Endothelial cell of umbilical vein (primary cell): ENCODE measurements at regions of chr19 and their contacts with region 1.

Region 1: GRCh38 chr19:16836115-16837034 is 7.2 kb downstream of the SIN3B start:
- DNase-seq: no peak
- H3K4me3 ChIP-seq: no peak overlapping the region
- H3K27ac ChIP-seq: no peak overlapping the region
- H3K4me1 ChIP-seq: peaks cover 33% of the 10 kb centered on the region
- H3K27me3 ChIP-seq: no peaks in the 10 kb centered on the region
- CTCF ChIP-seq: peak in 1 of 2 donors; percentile 4
- POLR2A ChIP-seq: no peak

Region 2: DNA sequence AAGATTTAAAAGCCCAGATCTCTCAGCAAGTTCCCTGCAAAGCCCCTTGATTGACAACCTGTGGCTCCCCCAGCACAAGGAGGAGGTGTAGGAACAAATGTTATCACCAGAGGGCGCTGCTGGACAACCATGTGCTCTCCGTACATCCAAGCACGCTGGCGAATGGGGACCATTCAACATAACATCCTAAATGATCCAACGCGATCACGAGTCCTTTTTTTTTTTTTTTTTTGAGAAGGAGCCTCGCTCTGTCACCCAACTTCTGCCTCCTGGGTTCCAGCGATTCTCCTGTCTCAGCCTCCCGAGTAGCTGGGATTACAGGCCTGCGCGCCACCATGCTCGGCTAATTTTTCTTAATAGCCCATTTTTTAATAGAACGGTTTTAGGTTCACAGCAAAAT is 64.8 kb before region 1 on chr19:
- CTCF ChIA-PET with region 1: no interaction called
- POLR2A ChIA-PET with region 1: no interaction called
- dilution Hi-C with region 1: no loop called
- intact Hi-C with region 1: loop called (anchors 10 kb)
- DNase-seq: peak; percentile 81
- H3K4me3 ChIP-seq: no peak overlapping the region
- H3K27ac ChIP-seq: no peak overlapping the region
- H3K4me1 ChIP-seq: no peaks in the 10 kb centered on the region
- H3K27me3 ChIP-seq: no peaks in the 10 kb centered on the region
- CTCF ChIP-seq: peak; percentile 73 to 79
- POLR2A ChIP-seq: no peak

Region 3: DNA sequence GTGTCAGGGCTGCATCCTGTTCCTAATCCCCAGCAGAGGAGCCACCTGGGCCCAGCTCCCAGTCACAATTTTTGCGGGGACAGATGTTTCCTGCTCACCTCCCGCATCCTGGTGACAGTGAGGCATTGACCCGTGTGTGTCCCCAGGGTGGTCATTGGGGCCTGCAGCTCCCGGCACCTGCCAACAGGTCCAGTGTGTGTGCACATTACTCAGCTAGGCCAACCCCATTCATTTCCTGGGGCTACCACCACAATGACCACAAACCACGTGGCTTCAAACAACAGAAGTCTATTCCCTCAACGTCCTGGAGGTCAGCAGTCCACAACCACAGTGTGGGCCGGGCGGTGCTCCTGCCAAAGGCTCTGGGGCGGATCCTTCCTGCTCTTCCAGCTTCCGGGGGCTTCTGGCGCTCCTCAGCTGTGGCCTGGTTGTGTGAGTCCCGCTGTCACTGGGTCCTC is 40.6 kb after region 1 on chr19:
- CTCF ChIA-PET with region 1: no interaction called
- POLR2A ChIA-PET with region 1: no interaction called
- dilution Hi-C with region 1: no loop called
- intact Hi-C with region 1: no loop called
- DNase-seq: peak; percentile 13
- H3K4me3 ChIP-seq: no peak overlapping the region
- H3K27ac ChIP-seq: peak overlapping the region; percentile 16
- H3K4me1 ChIP-seq: peaks cover 19% of the 10 kb centered on the region
- H3K27me3 ChIP-seq: no peaks in the 10 kb centered on the region
- CTCF ChIP-seq: no peak
- POLR2A ChIP-seq: no peak